ENCODE measurements at regions of chr7 and their contacts with region 1.

Region 1: GRCh38 chr7:151226875-151227782 is at the start of gene ABCF2:
- DNase-seq: peak; percentile 97
- H3K4me3 ChIP-seq: peak within 1 kb of the TSS; percentile 89
- CTCF ChIP-seq: no peak

Region 2: DNA sequence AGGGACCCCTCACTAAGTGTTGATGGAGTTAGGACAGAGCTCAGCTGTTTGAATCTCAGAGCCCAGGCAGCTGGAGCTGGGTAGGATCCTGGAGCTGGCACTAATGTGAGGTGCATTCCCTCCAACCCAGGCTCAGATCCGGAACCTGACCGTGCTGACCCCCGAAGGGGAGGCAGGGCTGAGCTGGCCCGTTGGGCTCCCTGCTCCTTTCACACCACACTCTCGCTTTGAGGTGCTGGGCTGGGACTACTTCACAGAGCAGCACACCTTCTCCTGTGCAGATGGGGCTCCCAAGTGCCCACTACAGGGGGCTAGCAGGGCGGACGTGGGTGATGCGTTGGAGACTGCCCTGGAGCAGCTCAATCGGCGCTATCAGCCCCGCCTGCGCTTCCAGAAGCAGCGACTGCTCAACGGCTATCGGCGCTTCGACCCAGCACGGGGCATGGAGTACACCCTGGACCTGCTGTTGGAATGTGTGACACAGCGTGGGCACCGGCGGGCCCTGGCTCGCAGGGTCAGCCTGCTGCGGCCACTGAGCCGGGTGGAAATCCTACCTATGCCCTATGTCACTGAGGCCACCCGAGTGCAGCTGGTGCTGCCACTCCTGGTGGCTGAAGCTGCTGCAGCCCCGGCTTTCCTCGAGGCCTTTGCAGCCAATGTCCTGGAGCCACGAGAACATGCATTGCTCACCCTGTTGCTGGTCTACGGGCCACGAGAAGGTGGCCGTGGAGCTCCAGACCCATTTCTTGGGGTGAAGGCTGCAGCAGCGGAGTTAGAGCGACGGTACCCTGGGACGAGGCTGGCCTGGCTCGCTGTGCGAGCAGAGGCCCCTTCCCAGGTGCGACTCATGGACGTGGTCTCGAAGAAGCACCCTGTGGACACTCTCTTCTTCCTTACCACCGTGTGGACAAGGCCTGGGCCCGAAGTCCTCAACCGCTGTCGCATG is 10.4 kb after region 1 on chr7:
- CTCF ChIA-PET with region 1: interaction called, 109 read pairs
- POLR2A ChIA-PET with region 1: interaction called, 16 read pairs
- DNase-seq: no peak
- H3K4me3 ChIP-seq: no peak overlapping the region
- CTCF ChIP-seq: no peak

Region 3: GRCh38 chr7:151261529-151261928 is 34.4 kb after region 1 on chr7:
- CTCF ChIA-PET with region 1: no interaction called
- POLR2A ChIA-PET with region 1: no interaction called
- DNase-seq: no peak
- H3K4me3 ChIP-seq: no peak overlapping the region
- CTCF ChIP-seq: no peak

Measured in AG04449 (cell line).